Mammary epithelial cell (primary cell): ENCODE measurements at regions of chr11 and their contacts with region 1.

Region 1: DNA sequence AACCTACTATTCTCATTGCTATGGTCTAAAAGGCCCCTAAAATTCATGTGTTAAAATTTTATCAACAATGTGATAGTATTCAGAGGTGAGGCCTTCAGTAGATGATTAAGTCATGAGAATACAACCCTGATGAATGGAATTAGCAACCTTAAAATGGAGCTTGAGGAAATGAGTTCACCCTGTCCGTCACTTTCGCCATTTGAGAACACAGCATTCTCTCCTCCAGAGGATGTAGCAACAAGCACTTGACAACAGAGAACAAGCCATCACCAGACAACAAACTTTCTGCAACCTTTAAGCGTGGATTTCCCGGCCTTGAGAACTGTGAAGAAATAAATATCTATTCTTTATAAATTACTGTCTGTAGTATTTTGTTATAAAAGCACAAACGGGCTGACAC is 197.0 kb downstream of the SBF2 start:
- DNase-seq: no peak
- H3K4me3 ChIP-seq: no peak overlapping the region
- H3K27ac ChIP-seq: no peak overlapping the region
- H3K4me1 ChIP-seq: no peaks in the 10 kb centered on the region
- H3K27me3 ChIP-seq: no peaks in the 10 kb centered on the region
- CTCF ChIP-seq: no peak

Region 2: GRCh38 chr11:9990221-9990975 is 106.6 kb before region 1 on chr11:
- CTCF ChIA-PET with region 1: no interaction called
- dilution Hi-C with region 1: loop called (anchors 5 kb)
- in situ Hi-C with region 1: no loop called
- intact Hi-C with region 1: no loop called
- DNase-seq: no peak
- H3K4me3 ChIP-seq: no peak overlapping the region
- H3K27ac ChIP-seq: no peak overlapping the region
- H3K4me1 ChIP-seq: no peaks in the 10 kb centered on the region
- H3K27me3 ChIP-seq: no peaks in the 10 kb centered on the region
- CTCF ChIP-seq: no peak

Region 3: DNA sequence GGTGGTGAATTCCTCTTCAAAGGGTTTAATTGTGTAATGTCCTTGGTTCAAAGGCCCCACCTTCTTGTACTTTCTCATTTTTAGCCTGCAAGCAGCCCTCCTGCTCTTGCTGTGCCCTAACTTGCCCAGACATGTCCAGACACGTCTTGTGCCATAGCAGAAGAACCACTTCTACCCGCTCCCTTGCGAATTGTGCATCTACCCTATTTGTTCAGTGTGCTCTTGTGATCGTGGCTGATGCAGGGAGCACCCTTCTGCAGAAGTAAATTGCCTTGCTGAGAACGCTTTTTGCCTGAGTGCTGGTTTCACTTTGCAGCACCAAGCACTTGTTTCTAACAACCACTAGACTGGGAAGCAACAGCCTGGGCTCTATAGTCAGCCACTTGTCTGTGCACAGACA is 52.4 kb before region 1 on chr11:
- CTCF ChIA-PET with region 1: no interaction called
- dilution Hi-C with region 1: no loop called
- in situ Hi-C with region 1: no loop called
- intact Hi-C with region 1: no loop called
- DNase-seq: peak; percentile 32
- H3K4me3 ChIP-seq: no peak overlapping the region
- H3K27ac ChIP-seq: no peak overlapping the region
- H3K4me1 ChIP-seq: no peaks in the 10 kb centered on the region
- H3K27me3 ChIP-seq: no peaks in the 10 kb centered on the region
- CTCF ChIP-seq: no peak

Region 4: GRCh38 chr11:10197091-10197490 is 100.1 kb after region 1 on chr11:
- CTCF ChIA-PET with region 1: no interaction called
- dilution Hi-C with region 1: loop called (anchors 5 kb)
- in situ Hi-C with region 1: no loop called
- intact Hi-C with region 1: no loop called
- DNase-seq: peak; percentile 30
- H3K4me3 ChIP-seq: no peak overlapping the region
- H3K27ac ChIP-seq: no peak overlapping the region
- H3K4me1 ChIP-seq: no peaks in the 10 kb centered on the region
- H3K27me3 ChIP-seq: no peaks in the 10 kb centered on the region
- CTCF ChIP-seq: no peak